Endothelial cell of umbilical vein (primary cell): ENCODE measurements at regions of chr5 and their contacts with region 1.

Region 1: DNA sequence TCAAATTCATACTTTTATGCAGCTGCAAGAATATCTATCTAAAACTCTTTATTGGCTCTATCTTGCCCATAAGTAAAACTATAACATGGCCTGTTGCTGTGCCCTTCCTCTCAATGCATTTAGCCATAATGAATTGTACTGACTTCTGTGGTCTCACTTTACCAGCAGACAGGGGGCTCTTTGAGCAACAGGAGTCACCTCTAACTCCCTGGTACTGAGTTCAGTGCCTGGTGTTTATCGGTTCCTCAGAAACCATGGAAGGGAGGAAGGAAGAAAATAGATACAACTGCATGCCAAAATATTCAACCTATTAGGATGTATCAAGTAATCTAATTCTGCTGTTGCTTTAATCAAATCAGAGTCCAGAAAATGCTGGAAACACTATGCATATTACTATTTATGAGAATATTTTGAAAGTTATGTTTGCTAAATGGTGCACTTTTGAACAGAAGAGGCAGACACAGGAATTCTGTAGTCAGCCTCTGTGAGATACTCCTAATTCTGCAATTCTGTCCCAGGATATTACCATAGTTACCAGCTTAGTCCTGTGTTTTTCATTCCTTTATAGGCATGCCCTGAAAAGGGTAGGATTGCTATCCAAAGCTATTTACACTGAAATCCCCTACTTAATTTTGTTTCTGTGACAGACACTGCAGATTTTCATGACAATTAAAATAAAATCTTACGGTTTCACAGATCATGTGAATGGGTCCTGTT is 89.8 kb downstream of the CD180 start:
- DNase-seq: no peak
- H3K4me3 ChIP-seq: no peak overlapping the region
- H3K27ac ChIP-seq: no peak overlapping the region
- H3K4me1 ChIP-seq: no peaks in the 10 kb centered on the region
- H3K27me3 ChIP-seq: no peaks in the 10 kb centered on the region
- CTCF ChIP-seq: no peak
- POLR2A ChIP-seq: no peak

Region 2: GRCh38 chr5:67073045-67073680 is 33.6 kb before region 1 on chr5:
- CTCF ChIA-PET with region 1: no interaction called
- POLR2A ChIA-PET with region 1: no interaction called
- dilution Hi-C with region 1: no loop called
- intact Hi-C with region 1: loop called (anchors 1 kb)
- DNase-seq: no peak
- H3K4me3 ChIP-seq: no peak overlapping the region
- H3K27ac ChIP-seq: no peak overlapping the region
- H3K4me1 ChIP-seq: peaks cover 4% of the 10 kb centered on the region
- H3K27me3 ChIP-seq: no peaks in the 10 kb centered on the region
- CTCF ChIP-seq: no peak
- POLR2A ChIP-seq: no peak

Region 3: DNA sequence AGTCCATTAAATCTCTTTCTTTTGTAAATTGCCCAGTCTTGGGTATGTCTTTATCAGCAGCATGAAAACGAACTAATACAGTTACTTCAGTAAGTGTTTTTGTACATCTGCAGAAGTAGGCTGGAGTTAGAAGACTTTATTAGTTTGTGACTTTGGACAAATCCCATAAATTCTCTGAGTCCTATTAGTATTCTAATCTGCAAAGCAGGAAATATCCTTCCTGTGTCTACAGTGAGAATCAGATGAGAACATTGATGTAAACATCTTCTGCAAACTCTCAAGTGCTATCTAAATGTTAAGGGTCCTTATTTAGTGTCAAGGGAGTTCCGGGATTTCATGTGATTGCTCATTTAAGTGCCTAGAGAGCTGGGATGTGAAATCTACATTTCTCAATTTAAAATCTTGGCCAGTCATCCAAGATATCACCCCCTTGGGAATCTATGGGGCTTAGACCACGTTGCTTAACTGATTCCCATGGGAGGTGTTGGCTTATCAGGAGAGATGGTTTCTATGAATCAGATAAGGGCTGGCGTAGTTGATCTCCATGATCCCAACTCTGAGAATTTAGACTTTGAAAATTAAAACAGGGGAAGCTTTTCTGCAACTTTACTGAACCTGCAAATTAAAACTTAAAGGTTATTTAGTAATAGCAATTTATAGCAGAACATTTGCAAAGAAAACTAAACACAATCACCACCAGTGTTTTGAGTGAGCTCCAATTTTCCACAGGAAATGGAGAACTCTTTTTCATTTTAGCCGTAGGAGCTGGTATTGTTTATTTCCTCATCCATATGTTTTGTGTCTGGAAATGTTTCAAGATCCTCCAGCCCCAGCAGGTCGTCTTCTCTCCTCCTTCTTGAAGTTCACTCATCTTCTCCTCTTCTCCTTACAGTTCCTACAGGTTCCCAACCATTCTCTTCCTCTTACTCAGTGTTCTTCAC is 331.4 kb after region 1 on chr5:
- CTCF ChIA-PET with region 1: no interaction called
- POLR2A ChIA-PET with region 1: no interaction called
- dilution Hi-C with region 1: no loop called
- intact Hi-C with region 1: no loop called
- DNase-seq: peak; percentile 69
- H3K4me3 ChIP-seq: no peak overlapping the region
- H3K27ac ChIP-seq: no peak overlapping the region
- H3K4me1 ChIP-seq: no peaks in the 10 kb centered on the region
- H3K27me3 ChIP-seq: no peaks in the 10 kb centered on the region
- CTCF ChIP-seq: no peak
- POLR2A ChIP-seq: no peak